Psoas muscle (tissue), 8 donors: ENCODE measurements at regions of chr2 and their contacts with region 1.

Region 1: DNA sequence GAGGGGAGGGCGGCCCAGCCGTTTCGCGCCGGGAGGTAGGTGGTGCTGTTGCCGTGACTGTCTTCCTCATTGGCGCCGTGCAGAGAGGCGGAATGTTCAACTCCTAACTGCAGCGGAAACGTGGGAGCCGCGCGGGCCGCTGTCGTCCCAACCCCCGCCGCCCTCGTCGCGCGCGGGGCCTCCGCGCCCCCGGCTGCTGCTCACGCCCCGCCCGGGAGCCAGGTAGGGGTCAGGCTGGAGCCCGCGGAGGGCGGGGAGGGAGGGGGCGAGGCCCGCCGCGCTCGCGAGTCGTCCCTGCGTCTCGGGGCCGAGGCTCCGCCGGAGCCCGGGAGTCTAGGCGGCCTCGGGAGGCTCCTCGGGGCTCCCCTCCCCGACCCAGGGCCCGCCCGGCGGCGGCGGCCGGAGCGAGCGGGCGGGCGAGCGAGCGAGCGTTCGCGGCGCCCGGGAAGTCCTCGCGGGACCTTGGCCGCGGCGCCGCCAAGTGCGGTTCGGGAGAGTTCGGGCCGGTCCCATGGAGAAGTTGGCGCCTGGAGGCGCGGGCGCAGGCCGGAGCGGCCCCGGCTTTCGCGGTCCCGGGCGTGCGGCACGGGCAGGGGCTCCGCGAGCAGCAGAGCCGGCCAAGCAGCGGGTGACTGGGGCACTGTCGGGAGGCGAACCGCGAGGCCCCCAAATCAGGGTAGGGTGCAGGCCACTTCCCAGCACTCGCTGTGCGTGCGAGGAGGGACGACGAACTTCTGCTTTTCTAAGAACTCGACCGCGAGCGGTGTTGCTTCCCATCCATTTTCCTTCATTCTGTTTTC is at the start of gene MAP3K20:
- DNase-seq: peak; percentile 82 to 91
- ATAC-seq: peak; percentile 74 to 81 (median 76)
- H3K4me3 ChIP-seq: peak within 1 kb of the TSS; percentile 89
- H3K27ac ChIP-seq: peak within 1 kb of the TSS; percentile 100
- H3K4me1 ChIP-seq: peaks cover 46% of the 10 kb centered on the region
- H3K27me3 ChIP-seq: no peaks in the 10 kb centered on the region
- CTCF ChIP-seq: peak; percentile 40
- total RNA-seq, gene MAP3K20: 366 to 533 (median 468) TPM

Region 2: GRCh38 chr2:173033084-173033483 is 42.9 kb before region 1 on chr2:
- intact Hi-C with region 1: loop called (anchors 5 kb)
- DNase-seq: no peak
- ATAC-seq: no peak
- H3K4me3 ChIP-seq: no peak overlapping the region
- H3K27ac ChIP-seq: peak overlapping the region; percentile 92
- H3K4me1 ChIP-seq: peaks cover 70% of the 10 kb centered on the region
- H3K27me3 ChIP-seq: no peaks in the 10 kb centered on the region
- CTCF ChIP-seq: no peak

Region 3: DNA sequence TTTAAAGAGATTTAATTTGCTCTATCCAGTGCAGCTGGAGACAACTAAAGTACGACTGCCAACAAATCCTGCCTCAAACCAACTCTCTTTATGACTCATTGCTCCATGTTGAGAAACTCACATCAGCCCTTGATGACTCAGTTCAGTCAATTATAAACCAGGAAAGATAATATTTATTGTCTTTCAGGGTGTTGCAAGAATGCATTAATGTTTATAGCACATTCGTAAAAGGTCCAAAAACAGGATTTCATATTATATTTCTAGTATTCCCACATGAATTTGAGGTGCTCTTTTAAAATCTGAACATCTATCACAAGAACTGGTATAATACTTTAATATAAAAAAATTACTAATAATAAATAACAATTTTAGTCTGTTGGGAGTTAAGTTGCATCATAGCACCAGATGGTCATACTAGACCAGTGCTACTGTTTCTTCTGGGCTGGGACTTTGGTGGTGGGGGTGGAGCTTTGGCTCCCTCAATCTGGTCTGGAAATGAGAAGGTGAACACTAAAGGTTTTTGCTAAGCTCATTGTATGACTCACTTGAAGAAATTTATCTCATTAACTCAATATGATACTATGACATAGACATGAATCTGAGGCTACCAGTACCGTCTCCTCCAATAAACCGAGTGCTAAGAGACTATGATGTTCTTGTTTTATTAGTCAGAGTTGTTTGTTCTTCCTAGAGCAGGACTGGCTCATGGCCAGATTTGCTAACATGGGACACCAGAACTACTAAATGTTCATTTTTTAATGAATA is 26.9 kb before region 1 on chr2:
- intact Hi-C with region 1: loop called in 1 of 2 experiments (anchors 1 kb)
- DNase-seq: peak; percentile 85 to 92
- ATAC-seq: peak; percentile 97 to 98 (median 97)
- H3K4me3 ChIP-seq: no peak overlapping the region
- H3K27ac ChIP-seq: peak overlapping the region; percentile 79
- H3K4me1 ChIP-seq: peaks cover 18% of the 10 kb centered on the region
- H3K27me3 ChIP-seq: no peaks in the 10 kb centered on the region
- CTCF ChIP-seq: no peak

Region 4: GRCh38 chr2:173210270-173211196 is 134.6 kb after region 1 on chr2:
- intact Hi-C with region 1: loop called (anchors 2 to 5 kb)
- DNase-seq: peak; percentile 39 to 72
- ATAC-seq: peak; percentile 83 to 91 (median 88)
- H3K4me3 ChIP-seq: peak overlapping the region; percentile 37
- H3K27ac ChIP-seq: peak overlapping the region; percentile 86
- H3K4me1 ChIP-seq: peaks cover 64% of the 10 kb centered on the region
- H3K27me3 ChIP-seq: no peaks in the 10 kb centered on the region
- CTCF ChIP-seq: peak; percentile 85